ENCODE measurements at regions of chr3 and their contacts with region 1.

Region 1: GRCh38 chr3:167882067-167882667 is 146.6 kb downstream of the SERPINI1 start:
- DNase-seq: peak; percentile 27
- CTCF ChIP-seq: peak; percentile 46

Region 2: DNA sequence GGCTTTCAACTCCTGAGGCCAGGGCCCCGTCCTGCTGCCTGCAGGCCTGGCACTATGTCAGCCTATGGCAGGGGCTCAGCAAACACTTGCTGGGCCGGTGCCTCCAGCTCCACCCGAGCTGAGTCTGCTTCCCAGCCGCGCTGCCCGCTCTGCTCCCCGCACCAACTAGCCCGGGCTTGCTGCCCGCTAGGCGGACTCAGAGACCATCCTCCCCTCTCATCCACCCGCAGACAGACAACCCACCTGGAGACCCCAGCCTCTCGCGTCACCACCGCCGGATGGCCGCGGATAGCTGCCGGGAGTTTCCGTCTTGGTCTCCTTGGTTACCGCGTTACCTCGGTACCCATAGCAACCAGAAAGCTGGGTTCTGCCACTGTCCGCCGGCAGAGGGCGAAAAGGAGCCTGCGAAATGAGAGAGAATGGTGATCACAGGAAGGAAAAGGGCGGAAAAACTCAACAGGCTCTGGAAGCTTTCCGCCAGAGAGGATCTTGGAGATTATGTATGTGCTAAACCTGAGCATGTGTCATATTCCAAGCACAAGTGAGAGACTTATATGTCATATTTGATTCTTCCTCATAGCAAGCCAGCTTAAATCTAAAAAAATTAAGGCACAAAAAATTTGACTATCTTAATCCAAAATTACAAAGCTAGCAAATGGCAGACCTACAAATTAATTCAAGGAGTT is 502.0 kb before region 1 on chr3 and contains the start of gene ZBBX:
- in situ Hi-C with region 1: loop called (anchors 25 kb)
- DNase-seq: peak; percentile 68
- CTCF ChIP-seq: peak; percentile 90